Caco-2 (cell line): ENCODE measurements at regions of chr12 and their contacts with region 1.

Region 1: GRCh38 chr12:8226355-8226754 is 1.1 kb downstream of the FAM90A1 start:
- DNase-seq: no peak
- H3K4me3 ChIP-seq: no peak overlapping the region
- H3K4me3 Mint-ChIP-seq: no peak overlapping the region
- H3K27ac Mint-ChIP-seq: no peak overlapping the region
- H3K4me1 ChIP-seq: no peaks in the 10 kb centered on the region
- H3K4me1 Mint-ChIP-seq: no peaks in the 10 kb centered on the region
- H3K27me3 ChIP-seq: no peaks in the 10 kb centered on the region
- H3K27me3 Mint-ChIP-seq: peaks cover 5% of the 10 kb centered on the region
- CTCF ChIP-seq: no peak

Region 2: DNA sequence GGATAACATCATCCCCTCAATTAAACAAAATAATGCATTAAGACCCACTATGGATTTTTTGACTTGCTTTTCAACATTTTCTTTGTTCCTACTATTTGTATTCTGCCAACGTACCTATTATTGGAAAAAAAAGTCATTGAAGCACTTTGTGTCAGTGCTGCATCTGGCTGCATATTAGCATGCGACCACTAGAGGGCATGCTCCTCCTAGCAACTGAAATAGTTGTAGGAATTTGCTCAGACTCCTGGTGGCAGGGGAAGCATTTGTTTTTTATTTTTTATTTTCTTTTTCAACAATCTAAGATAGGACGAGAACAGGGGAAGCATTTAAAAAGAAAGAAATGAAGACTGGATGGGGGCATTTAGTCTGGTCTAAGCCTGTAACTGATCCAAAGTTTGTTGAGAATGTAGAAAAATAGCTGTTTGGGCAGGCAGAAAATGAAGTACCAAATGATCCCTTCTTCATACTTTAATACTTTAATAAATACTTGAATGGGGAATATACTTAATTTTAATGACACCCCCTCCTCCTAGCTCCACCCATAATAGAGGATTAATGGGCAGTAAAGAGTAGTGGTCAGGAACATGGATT is 117.5 kb before region 1 on chr12:
- CTCF ChIA-PET with region 1: interaction called, 12 read pairs
- POLR2A ChIA-PET with region 1: no interaction called
- intact Hi-C with region 1: no loop called
- DNase-seq: peak; percentile 75 to 83
- H3K4me3 ChIP-seq: no peak overlapping the region
- H3K4me3 Mint-ChIP-seq: no peak overlapping the region
- H3K27ac Mint-ChIP-seq: no peak overlapping the region
- H3K4me1 ChIP-seq: no peaks in the 10 kb centered on the region
- H3K4me1 Mint-ChIP-seq: no peaks in the 10 kb centered on the region
- H3K27me3 ChIP-seq: no peaks in the 10 kb centered on the region
- H3K27me3 Mint-ChIP-seq: no peaks in the 10 kb centered on the region
- CTCF ChIP-seq: peak; percentile 99